ENCODE measurements at regions of chr5 and their contacts with region 1.

Region 1: DNA sequence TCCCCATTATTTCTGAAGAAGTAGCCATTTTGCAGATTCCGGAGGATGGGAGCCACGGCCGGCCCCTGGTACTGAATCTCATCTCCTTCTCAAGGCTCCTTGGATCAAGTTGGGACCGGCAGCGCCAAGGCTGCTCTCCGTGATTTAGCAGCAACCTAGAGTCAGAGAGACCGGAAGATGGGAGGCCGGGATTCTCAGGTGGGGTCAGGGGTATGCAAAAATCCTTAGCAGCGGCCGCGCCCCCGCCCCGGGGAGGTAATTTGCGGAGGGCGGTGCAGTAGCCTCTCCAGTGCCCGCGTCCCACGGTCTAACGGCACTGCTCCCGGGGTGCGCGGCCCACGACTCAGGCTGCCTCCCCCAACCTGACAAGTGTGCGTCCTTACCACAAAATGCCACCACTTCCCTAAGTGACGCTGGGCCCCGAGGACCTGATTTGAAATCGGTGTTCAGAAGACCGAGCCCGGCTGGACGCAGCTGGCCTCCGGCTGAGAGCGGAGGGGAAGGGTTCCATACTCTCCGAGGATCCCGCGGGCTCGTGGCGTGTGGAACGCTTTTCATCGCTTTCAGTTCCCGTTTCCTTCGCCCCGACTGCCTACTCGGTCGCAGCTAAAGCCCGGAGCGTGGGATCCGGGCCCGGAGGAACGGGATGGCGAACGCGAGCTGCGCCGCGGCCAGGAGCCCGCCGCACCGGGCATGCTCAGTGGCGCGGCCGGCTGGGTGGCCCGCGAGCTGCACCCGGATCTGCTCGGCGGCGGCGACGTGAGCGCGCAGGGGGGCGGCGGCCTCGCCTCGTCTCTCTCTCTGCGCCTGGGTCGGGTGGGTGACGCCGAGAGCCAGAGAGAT is at the start of gene SCAMP1:
- DNase-seq: peak; percentile 92 to 96 (median 93)
- ATAC-seq: peak; percentile 92 to 98 (median 98)
- H3K4me3 ChIP-seq: peak within 1 kb of the TSS; percentile 76 to 97 (median 89)
- H3K27ac ChIP-seq: peak within 1 kb of the TSS; percentile 69 to 95 (median 92)
- H3K4me1 ChIP-seq: peaks cover 0 to 29% (median 24%) of the 10 kb centered on the region in 12 donors
- H3K27me3 ChIP-seq: no peaks in the 10 kb centered on the region
- CTCF ChIP-seq: peak; percentile 14 to 67 (median 51)
- POLR2A ChIP-seq: peak in 1 of 2 donors; percentile 67
- total RNA-seq, gene SCAMP1: 18.9 to 40.6 (median 37.6) TPM

Region 2: GRCh38 chr5:77531297-77531696 is 828.8 kb before region 1 on chr5:
- intact Hi-C with region 1: no loop called
- DNase-seq: no peak
- ATAC-seq: no peak
- H3K4me3 ChIP-seq: no peak overlapping the region
- H3K27ac ChIP-seq: no peak overlapping the region
- H3K4me1 ChIP-seq: no peaks in the 10 kb centered on the region
- H3K27me3 ChIP-seq: peaks cover 0 to 25% (median 0%) of the 10 kb centered on the region in 9 donors
- CTCF ChIP-seq: no peak
- POLR2A ChIP-seq: no peak

Region 3: GRCh38 chr5:78509884-78510769 is 150.1 kb after region 1 on chr5:
- intact Hi-C with region 1: loop called in 1 of 10 experiments (anchors 10 kb)
- DNase-seq: peak; percentile 70 to 90 (median 85)
- ATAC-seq: peak; percentile 84 to 95 (median 91)
- H3K4me3 ChIP-seq: peak overlapping the region; percentile 24 to 67 (median 48)
- H3K27ac ChIP-seq: peak overlapping the region in 11 of 12 donors; percentile 51 to 85 (median 63)
- H3K4me1 ChIP-seq: peaks cover 0 to 76% (median 33%) of the 10 kb centered on the region in 12 donors
- H3K27me3 ChIP-seq: no peaks in the 10 kb centered on the region
- CTCF ChIP-seq: peak in 5 of 12 donors; percentile 14 to 41 (median 22)
- POLR2A ChIP-seq: peak in 1 of 2 donors; percentile 12

Measured in heart left ventricle (tissue), 16 donors.